CD4-positive, alpha-beta memory T cell (primary cell): ENCODE measurements at regions of chr20 and their contacts with region 1.

Region 1: DNA sequence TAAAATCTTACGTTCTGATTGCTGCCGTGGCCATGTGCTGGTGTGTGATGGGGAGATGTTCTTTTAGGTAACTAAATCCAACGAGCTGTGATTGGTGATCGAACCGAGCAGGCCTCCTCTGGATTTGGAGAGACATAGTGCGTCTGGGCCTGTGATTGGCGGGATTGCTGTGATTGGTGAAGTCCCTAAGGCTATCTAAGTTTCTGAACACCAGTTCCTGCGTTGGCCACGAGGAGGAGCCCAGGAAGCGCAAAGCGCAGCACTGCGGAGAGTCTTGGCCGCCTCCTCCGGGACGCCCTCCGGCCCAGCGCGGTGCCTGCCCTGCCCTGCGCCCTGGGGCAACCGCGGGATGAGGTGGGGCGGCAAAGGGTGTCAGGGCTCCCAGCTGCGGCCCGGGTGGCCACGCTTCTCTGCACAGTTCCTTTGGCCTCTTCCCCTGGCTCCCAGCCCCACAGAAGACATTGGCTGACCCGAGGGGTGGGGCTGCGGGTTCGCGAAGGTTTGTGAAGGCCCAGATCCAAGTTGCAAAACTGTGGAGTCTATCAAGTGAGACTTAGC is 33.0 kb downstream of the HNF4A start:
- DNase-seq: peak; percentile 41 to 69 (median 46)
- H3K4me3 ChIP-seq: no peak overlapping the region
- H3K4me3 Mint-ChIP-seq: no peak overlapping the region
- H3K27ac ChIP-seq: no peak overlapping the region
- H3K27ac Mint-ChIP-seq: no peak overlapping the region
- H3K4me1 ChIP-seq: no peaks in the 10 kb centered on the region
- H3K4me1 Mint-ChIP-seq: peaks cover 2 to 11% (median 6%) of the 10 kb centered on the region in 4 donors
- H3K27me3 ChIP-seq: no peaks in the 10 kb centered on the region
- H3K27me3 Mint-ChIP-seq: peaks cover 8 to 17% of the 10 kb centered on the region in 2 donors

Region 2: GRCh38 chr20:44115762-44116644 is 272.5 kb before region 1 on chr20:
- CTCF ChIA-PET with region 1: no interaction called
- POLR2A ChIA-PET with region 1: no interaction called
- intact Hi-C with region 1: loop called (anchors 5 kb)
- DNase-seq: no peak
- H3K4me3 ChIP-seq: no peak overlapping the region
- H3K4me3 Mint-ChIP-seq: no peak overlapping the region
- H3K27ac ChIP-seq: no peak overlapping the region
- H3K27ac Mint-ChIP-seq: no peak overlapping the region
- H3K4me1 ChIP-seq: peaks cover 4% of the 10 kb centered on the region
- H3K4me1 Mint-ChIP-seq: peaks cover 2 to 5% (median 4%) of the 10 kb centered on the region in 4 donors
- H3K27me3 ChIP-seq: peaks cover 7% of the 10 kb centered on the region
- H3K27me3 Mint-ChIP-seq: peaks cover 26 to 37% of the 10 kb centered on the region in 2 donors

Region 3: GRCh38 chr20:44460795-44461141 is 72.2 kb after region 1 on chr20:
- CTCF ChIA-PET with region 1: no interaction called
- POLR2A ChIA-PET with region 1: no interaction called
- intact Hi-C with region 1: loop called (anchors 5 kb)
- DNase-seq: peak in 3 of 5 donors; percentile 6 to 9 (median 9)
- H3K4me3 ChIP-seq: no peak overlapping the region
- H3K4me3 Mint-ChIP-seq: no peak overlapping the region
- H3K27ac ChIP-seq: no peak overlapping the region
- H3K27ac Mint-ChIP-seq: no peak overlapping the region
- H3K4me1 ChIP-seq: no peaks in the 10 kb centered on the region
- H3K4me1 Mint-ChIP-seq: no peaks in the 10 kb centered on the region
- H3K27me3 ChIP-seq: no peaks in the 10 kb centered on the region
- H3K27me3 Mint-ChIP-seq: no peaks in the 10 kb centered on the region

Region 4: DNA sequence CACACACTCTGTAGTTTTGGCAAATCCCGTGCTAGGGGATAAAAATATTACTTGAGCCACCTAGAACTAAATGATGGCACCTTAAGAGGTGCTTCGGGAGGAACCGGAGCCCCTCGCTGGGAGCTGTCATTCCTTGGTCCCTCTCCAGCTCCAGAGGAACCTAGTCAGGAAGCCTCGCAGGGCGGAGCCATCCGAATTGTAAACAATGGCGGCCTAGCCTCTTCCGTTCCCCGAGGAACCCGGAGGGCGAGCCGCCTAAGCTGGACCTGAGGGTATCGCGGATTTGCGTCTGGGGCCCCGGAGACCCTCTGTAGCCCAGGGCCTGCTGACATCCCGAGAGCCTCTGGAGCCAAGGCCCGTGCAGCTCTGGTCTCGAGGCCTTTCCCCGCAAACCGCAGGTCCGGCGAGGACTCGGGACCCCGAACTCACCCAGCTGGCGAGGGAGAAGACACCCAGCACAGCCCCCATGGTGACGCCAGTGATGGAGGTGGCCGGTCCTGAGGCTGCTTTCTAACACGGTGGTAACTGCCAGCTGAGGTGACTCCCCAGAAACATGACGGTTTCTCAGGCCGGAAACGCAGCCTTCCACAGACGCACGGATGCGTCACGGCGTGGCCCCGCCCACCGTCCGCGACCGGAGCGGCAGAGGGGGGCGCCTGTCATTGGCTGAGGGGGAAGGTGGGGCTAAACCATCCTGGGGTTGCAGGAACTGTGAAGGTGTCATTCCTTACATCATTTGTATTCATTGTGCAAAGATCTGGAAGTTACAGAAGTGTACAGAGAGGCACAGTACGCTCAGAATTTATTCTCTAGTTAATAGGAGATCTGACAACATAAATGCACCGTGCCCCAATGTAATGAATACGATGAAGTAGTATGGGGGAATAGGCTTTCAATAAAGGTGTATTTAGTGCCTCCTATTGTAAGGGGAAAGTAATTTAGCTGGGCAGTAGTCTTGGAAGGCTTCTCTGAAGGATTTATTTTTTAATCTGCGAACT is 133.2 kb after region 1 on chr20 and contains the start of gene SERINC3:
- CTCF ChIA-PET with region 1: interaction called, 3 read pairs
- POLR2A ChIA-PET with region 1: no interaction called
- intact Hi-C with region 1: loop called (anchors 5 kb)
- DNase-seq: peak; percentile 97 to 98 (median 98)
- H3K4me3 ChIP-seq: peak within 1 kb of the TSS; percentile 62 to 78
- H3K4me3 Mint-ChIP-seq: peak within 1 kb of the TSS; percentile 81 to 94 (median 90)
- H3K27ac ChIP-seq: peak within 1 kb of the TSS; percentile 99
- H3K27ac Mint-ChIP-seq: peak within 1 kb of the TSS; percentile 82 to 99 (median 95)
- H3K4me1 ChIP-seq: peaks cover 54% of the 10 kb centered on the region
- H3K4me1 Mint-ChIP-seq: peaks cover 29 to 68% (median 54%) of the 10 kb centered on the region in 4 donors
- H3K27me3 ChIP-seq: no peaks in the 10 kb centered on the region
- H3K27me3 Mint-ChIP-seq: no peaks in the 10 kb centered on the region
- total RNA-seq, gene SERINC3: 84.8 to 90.1 TPM

Region 5: DNA sequence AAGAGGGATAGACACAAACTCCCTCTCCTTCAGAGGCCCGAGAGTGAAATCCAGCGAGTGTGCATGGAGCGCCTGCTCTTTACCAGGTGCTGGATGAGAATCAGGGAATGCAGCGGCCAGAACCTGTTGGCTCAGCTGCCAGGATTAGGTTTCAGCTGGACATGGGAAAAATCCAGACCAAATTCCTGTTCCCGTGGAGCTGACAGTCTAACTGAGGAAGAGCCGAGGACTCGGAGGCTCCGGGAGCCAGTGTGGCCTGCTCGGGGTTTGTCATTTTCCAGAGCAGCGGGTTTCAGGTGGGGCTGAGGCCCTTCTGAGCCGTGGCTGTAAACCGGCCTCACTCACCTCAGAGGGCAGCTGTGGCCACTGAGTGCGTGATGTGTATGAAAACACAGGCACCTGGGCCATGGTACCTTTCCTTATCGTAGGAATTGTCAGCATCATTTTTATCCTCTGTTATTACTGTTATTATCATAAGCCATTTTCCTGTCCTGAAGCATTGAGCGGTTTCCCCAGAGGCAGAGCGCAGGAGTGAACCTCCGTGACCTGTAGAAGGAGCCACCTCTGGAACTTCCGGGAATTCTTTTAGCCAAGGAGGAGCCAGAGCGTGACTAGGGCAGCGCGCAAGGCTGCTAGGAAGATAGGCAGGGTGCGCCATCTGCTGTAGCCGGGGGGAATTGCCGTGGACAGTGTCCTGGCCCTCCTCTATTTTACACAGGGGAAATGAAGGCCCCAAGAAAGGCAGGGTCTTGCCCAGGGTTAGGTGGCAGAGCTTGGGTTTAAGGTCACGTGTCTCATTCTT is 221.2 kb after region 1 on chr20:
- CTCF ChIA-PET with region 1: interaction called, 67 read pairs
- POLR2A ChIA-PET with region 1: no interaction called
- intact Hi-C with region 1: loop called (anchors 1 kb)
- DNase-seq: peak; percentile 65 to 80 (median 74)
- H3K4me3 ChIP-seq: no peak overlapping the region
- H3K4me3 Mint-ChIP-seq: peak overlapping the region in 6 of 8 donors; percentile 62 to 77 (median 66)
- H3K27ac ChIP-seq: peak overlapping the region; percentile 23
- H3K27ac Mint-ChIP-seq: peak overlapping the region; percentile 17 to 98 (median 85)
- H3K4me1 ChIP-seq: peaks cover 12% of the 10 kb centered on the region
- H3K4me1 Mint-ChIP-seq: peaks cover 5 to 19% (median 12%) of the 10 kb centered on the region in 4 donors
- H3K27me3 ChIP-seq: no peaks in the 10 kb centered on the region
- H3K27me3 Mint-ChIP-seq: no peaks in the 10 kb centered on the region

Region 6: DNA sequence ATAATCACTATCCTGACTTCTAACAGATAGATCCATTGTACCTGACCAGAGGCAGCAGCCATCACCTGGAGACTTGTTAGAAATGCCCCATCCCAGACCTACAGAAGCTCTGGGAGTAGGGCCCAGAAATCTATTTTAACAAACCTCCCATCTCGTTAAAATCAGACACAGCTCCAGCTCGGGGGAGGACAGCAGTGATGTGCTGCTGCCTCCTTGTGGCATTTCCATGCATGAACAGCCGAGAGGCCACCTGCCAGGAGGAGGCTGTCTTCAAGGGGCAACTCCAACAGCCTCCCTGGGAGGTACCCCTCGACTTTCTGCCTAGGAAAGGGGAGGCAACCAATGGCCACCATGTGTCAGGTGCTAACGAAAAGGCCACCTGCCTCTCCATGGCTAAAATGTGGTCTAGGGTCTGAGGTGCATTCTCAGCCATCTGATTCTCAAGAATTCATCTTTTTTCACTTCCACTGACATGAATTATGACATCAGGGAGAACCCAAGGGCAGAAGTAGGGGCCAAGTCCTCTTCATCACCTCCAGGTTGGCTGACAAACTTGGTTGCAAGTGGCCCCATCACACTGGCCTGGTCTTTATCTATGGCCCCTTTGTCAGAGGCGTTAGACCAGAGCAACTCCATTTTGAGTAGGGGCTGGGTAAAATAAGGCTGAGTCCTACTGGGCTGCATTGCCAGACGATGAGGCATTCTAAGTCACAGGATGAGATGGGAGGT is 345.0 kb after region 1 on chr20:
- CTCF ChIA-PET with region 1: no interaction called
- POLR2A ChIA-PET with region 1: no interaction called
- intact Hi-C with region 1: loop called (anchors 1 kb)
- DNase-seq: peak in 4 of 5 donors; percentile 45 to 58 (median 50)
- H3K4me3 ChIP-seq: no peak overlapping the region
- H3K4me3 Mint-ChIP-seq: no peak overlapping the region
- H3K27ac ChIP-seq: no peak overlapping the region
- H3K27ac Mint-ChIP-seq: peak overlapping the region in 1 of 7 donors; percentile 21
- H3K4me1 ChIP-seq: no peaks in the 10 kb centered on the region
- H3K4me1 Mint-ChIP-seq: peaks cover 7 to 23% (median 18%) of the 10 kb centered on the region in 4 donors
- H3K27me3 ChIP-seq: no peaks in the 10 kb centered on the region
- H3K27me3 Mint-ChIP-seq: no peaks in the 10 kb centered on the region

Region 7: GRCh38 chr20:44866703-44867335 is 478.3 kb after region 1 on chr20:
- CTCF ChIA-PET with region 1: no interaction called
- POLR2A ChIA-PET with region 1: no interaction called
- intact Hi-C with region 1: loop called (anchors 1 kb)
- DNase-seq: no peak
- H3K4me3 ChIP-seq: no peak overlapping the region
- H3K4me3 Mint-ChIP-seq: peak overlapping the region in 7 of 8 donors; percentile 57 to 82 (median 74)
- H3K27ac ChIP-seq: no peak overlapping the region
- H3K27ac Mint-ChIP-seq: peak overlapping the region in 2 of 7 donors; percentile 29 to 65
- H3K4me1 ChIP-seq: peaks cover 4% of the 10 kb centered on the region
- H3K4me1 Mint-ChIP-seq: peaks cover 3 to 10% (median 9%) of the 10 kb centered on the region in 4 donors
- H3K27me3 ChIP-seq: peaks cover 3% of the 10 kb centered on the region
- H3K27me3 Mint-ChIP-seq: peaks cover 5 to 6% of the 10 kb centered on the region in 2 donors